Panc1 (cell line): ENCODE measurements at regions of chr15 and their contacts with region 1.

Region 1: DNA sequence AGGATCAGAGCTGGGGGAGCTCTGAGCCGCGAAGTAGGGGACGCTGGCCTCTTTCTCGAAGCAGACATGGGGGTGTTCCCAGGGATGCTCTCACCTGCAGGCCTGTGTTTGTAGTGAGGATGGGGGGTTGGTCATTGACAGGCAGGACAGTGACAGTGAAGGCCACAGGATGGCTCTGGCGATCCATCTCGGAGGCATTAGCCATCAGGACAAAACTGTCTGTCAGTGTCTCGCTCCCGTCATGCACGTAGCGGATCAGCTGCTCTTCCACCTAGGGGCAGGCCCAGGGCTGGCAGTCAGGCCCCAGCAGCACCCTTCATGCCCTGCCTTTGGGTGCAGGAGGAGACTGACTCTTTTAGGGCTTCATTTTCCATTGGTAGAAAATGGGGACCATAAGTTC is 28.0 kb downstream of the CSPG4 start:
- DNase-seq: no peak
- ATAC-seq: no peak
- H3K4me3 ChIP-seq: no peak overlapping the region
- H3K27ac ChIP-seq: no peak overlapping the region
- H3K4me1 ChIP-seq: no peaks in the 10 kb centered on the region
- H3K27me3 ChIP-seq: no peaks in the 10 kb centered on the region
- CTCF ChIP-seq: no peak

Region 2: DNA sequence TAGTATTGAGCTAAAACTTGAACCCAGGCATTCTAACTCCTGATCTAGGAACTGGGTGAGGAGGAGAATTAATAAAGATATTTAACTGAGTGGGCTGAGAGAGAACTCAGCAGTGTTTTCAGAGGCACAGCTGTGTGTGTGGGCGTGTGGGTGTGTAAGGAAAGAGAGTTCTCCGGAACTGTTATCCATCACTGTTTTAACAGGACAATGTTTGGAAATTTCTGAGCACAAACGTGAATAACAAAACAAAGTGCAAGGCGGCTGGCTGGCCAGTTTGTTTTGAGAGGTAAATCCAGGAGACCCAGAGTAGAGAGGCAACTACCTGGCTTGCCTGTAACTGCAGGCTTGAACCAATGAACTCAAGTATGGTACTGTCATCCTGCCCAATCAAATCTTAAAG is 100.5 kb before region 1 on chr15:
- CTCF ChIA-PET with region 1: no interaction called
- POLR2A ChIA-PET with region 1: no interaction called
- in situ Hi-C with region 1: no loop called
- intact Hi-C with region 1: no loop called
- DNase-seq: no peak
- ATAC-seq: no peak
- H3K4me3 ChIP-seq: no peak overlapping the region
- H3K27ac ChIP-seq: no peak overlapping the region
- H3K4me1 ChIP-seq: peaks cover 5% of the 10 kb centered on the region
- H3K27me3 ChIP-seq: no peaks in the 10 kb centered on the region
- CTCF ChIP-seq: no peak

Region 3: DNA sequence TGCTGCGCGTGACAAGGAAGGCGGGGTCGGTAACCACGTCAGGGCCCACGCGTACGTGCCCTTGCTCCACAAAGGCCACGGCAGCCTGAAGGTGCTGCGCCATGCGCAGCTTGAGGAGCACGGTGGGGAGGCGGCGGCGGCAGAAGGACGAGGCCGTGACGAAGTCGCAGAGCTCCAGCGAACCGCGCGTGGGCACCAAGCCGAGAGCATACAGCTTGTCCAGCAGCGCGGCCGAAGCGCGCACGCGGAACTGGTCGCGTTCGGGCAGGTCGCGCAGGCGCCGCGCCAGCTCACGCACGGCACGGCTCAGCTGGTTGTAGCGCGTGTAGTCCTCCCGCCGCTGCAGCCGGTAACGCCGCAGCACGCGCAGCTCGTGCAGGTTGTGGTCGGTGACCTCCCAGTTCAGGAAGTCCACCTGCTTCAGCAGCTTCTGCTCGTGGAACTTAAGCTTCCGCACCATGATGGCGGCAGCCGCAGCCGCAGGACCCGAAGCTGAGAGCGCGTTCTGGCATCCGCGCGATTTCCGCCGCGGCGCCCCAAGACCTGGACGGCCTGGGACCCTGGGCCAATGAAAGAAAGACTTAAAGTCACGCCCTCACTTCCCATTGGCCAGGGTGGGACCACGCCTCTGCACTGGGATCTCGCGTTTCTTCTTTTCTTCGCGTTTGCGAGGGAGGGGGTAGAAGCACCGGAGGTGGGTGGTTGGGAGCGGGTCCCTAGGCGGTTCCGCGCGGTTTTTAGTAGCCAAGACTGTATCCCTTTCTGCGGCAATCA is 44.7 kb before region 1 on chr15 and contains the start of gene IMP3:
- CTCF ChIA-PET with region 1: interaction called, 6 read pairs
- POLR2A ChIA-PET with region 1: no interaction called
- in situ Hi-C with region 1: no loop called
- intact Hi-C with region 1: loop called (anchors 5 kb)
- DNase-seq: peak; percentile 93
- ATAC-seq: peak; percentile 97
- H3K4me3 ChIP-seq: peak within 1 kb of the TSS; percentile 71 to 99
- H3K27ac ChIP-seq: peak within 1 kb of the TSS; percentile 94
- H3K4me1 ChIP-seq: peaks cover 15% of the 10 kb centered on the region
- H3K27me3 ChIP-seq: no peaks in the 10 kb centered on the region
- CTCF ChIP-seq: no peak
- total RNA-seq, gene IMP3: 56.0 TPM

Region 4: DNA sequence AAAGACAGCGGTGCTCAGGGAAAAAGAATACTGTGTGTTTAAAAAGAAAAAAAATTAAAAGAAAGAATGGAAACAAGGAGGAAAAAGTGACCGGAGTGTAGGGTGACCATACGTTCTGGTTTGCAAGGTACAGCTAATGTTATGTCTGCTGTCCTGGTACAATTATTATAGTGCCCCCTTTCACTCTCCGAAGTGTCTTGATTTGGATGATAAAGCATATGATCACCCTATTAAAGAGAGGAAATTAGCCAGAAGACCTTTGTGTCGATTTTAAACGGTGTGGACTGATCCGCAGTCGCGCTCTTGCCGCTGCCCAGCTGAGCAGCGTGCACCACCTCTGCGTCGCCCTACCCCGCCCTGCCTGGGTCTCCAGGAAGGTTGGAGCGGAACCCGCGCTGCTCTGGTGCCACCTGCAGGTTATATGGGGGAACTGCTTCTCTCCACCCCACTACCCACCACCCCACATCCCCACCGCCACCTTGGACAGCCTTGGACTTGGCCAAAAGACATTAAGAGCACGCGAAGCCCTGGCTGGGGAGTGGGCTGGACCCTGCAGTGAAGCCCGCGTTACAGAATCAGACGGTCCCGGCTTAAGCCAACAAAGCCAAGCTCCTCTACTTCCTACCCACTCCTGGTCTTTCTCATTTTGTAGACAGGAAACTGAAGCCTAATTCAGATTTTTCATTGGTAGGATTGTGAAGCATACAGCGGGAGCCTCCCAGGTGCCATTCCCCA is 117.4 kb after region 1 on chr15:
- CTCF ChIA-PET with region 1: interaction called, 14 read pairs
- POLR2A ChIA-PET with region 1: no interaction called
- in situ Hi-C with region 1: no loop called
- intact Hi-C with region 1: loop called (anchors 5 kb)
- DNase-seq: peak; percentile 56
- ATAC-seq: peak; percentile 99
- H3K4me3 ChIP-seq: peak overlapping the region; percentile 31 to 48
- H3K27ac ChIP-seq: no peak overlapping the region
- H3K4me1 ChIP-seq: peaks cover 4% of the 10 kb centered on the region
- H3K27me3 ChIP-seq: peaks cover 15% of the 10 kb centered on the region
- CTCF ChIP-seq: peak; percentile 95